Stomach (tissue), 19 donors: ENCODE measurements at regions of chr2 and their contacts with region 1.

Region 1: GRCh38 chr2:149020432-149020851 is 18.1 kb upstream of the LYPD6B start:
- DNase-seq: peak; percentile 61 to 79
- H3K4me3 ChIP-seq: no peak overlapping the region
- H3K27ac ChIP-seq: peak overlapping the region in 1 of 5 donors; percentile 23
- H3K4me1 ChIP-seq: peaks cover 8 to 42% (median 14%) of the 10 kb centered on the region in 4 donors
- H3K27me3 ChIP-seq: no peaks in the 10 kb centered on the region
- CTCF ChIP-seq: no peak
- EP300 ChIP-seq: no peak
- POLR2A ChIP-seq: no peak

Region 2: GRCh38 chr2:149040451-149040850 is 20.0 kb after region 1 on chr2:
- intact Hi-C with region 1: no loop called
- DNase-seq: no peak
- H3K4me3 ChIP-seq: no peak overlapping the region
- H3K27ac ChIP-seq: no peak overlapping the region
- H3K4me1 ChIP-seq: peaks cover 4 to 19% (median 12%) of the 10 kb centered on the region in 4 donors
- H3K27me3 ChIP-seq: peaks cover 0 to 34% (median 13%) of the 10 kb centered on the region in 3 donors
- CTCF ChIP-seq: peak in 1 of 7 experiments; percentile 21
- EP300 ChIP-seq: no peak
- POLR2A ChIP-seq: no peak

Region 3: DNA sequence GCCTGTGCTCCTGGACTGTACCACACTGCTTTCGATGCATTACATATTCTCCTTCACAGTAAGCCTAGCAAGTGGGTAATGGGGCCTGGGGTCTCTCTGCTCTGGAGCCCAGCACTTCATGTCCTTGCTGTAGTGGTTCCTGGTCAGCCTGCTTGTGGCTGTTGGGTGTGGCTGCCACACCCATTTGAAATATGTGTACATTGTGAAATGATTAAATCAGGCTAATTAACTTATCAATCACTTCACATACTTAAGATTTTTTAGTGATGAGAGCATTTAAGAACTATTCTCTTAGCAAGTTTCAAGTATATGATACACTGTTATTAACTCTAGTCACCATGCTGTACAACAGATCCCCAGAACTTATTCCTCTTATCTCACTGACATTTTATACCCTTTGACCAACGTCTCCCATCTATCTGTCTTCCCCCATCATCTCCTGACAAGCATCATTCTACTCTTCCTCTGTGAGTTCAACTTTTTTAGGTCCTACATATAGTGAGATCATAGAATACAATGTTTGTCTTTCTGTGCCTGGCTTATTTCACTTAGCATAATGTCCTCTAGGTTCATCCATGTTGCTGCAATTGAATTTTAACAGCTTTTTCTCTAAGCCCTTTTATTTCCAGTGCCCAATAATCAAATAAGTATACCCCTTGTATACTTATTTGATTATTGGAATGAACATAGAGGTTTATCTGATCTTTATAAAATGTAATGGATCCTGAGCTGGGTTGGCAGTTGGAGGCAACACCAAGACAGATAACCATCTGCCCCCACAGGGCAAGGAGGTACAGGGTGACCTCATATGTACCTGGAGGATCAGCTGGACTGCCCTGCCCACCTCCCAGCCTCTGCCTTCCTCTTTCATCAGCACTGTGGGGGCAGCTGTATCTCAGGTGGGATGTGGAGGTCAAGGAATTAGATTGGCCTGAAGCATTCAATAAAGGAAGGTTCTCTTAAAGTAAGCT is 402.2 kb after region 1 on chr2:
- intact Hi-C with region 1: no loop called
- DNase-seq: peak in 1 of 2 donors; percentile 64
- H3K4me3 ChIP-seq: no peak overlapping the region
- H3K27ac ChIP-seq: no peak overlapping the region
- H3K4me1 ChIP-seq: peaks cover 0 to 6% (median 0%) of the 10 kb centered on the region in 4 donors
- H3K27me3 ChIP-seq: no peaks in the 10 kb centered on the region
- CTCF ChIP-seq: no peak
- EP300 ChIP-seq: no peak
- POLR2A ChIP-seq: no peak

Region 4: GRCh38 chr2:149561309-149561926 is 541.0 kb after region 1 on chr2:
- intact Hi-C with region 1: loop called (anchors 5 kb)
- DNase-seq: peak in 1 of 2 donors; percentile 60
- H3K4me3 ChIP-seq: no peak overlapping the region
- H3K27ac ChIP-seq: no peak overlapping the region
- H3K4me1 ChIP-seq: peaks cover 0 to 36% (median 17%) of the 10 kb centered on the region in 4 donors
- H3K27me3 ChIP-seq: no peaks in the 10 kb centered on the region
- CTCF ChIP-seq: peak in 5 of 7 experiments; percentile 49 to 94 (median 83)
- EP300 ChIP-seq: no peak
- POLR2A ChIP-seq: no peak